ENCODE measurements at regions of chr18 and their contacts with region 1.

Region 1: DNA sequence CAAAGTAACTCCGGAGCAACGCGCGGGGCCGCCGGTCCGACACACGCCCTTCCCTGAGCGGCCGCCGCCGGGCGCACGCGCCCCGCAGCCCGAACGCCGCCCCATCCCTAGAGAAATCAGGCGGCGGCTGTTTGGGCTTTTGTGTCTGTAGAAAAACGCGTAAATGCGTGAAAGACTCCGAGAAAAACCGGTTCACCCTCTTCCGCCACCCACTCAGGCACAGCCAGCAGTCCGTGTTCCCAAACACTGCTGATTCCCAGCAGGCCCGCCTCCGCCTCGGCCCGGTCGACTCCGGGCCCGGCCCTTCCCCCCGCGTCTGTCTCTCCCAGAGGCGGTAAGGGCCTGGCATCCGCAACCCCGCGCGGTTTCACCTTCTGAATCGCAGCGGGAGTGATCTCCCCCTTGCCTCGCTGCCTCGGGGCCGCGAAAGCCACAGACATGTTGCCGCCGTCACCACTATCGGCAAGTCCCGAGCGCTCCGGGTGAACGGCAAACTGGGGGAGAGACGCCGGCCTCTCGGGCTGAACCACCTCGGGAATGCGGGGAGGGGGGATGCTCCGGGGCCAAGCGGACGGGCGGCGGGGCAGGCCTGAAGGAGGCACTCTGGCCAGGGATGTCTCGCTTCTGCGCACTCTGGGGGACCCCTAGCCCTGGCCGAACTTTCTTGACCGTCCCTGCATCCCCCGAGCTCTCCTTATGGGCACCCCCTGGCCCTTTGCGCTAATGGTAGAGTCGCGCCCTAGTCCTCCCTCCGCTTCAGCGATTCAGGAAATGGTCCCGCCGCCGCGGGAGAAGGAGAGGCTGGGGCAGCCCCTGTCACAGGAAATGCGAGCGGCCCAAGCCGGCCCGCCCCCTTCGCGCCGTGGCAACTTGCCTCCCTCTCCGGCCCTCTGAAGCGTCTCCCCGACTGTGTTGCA is at the start of gene SS18:
- DNase-seq: peak; percentile 94 to 96 (median 95)
- ATAC-seq: peak; percentile 96
- H3K4me3 ChIP-seq: peak within 1 kb of the TSS; percentile 60
- H3K4me1 ChIP-seq: peaks cover 16% of the 10 kb centered on the region
- CTCF ChIP-seq: no peak
- total RNA-seq, gene SS18: 45.5 to 61.8 (median 55.7) TPM

Region 2: GRCh38 chr18:25862881-25863600 is 227.3 kb before region 1 on chr18:
- intact Hi-C with region 1: no loop called
- DNase-seq: no peak
- ATAC-seq: no peak
- H3K4me3 ChIP-seq: no peak overlapping the region
- H3K4me1 ChIP-seq: no peaks in the 10 kb centered on the region
- CTCF ChIP-seq: no peak

Region 3: GRCh38 chr18:26226229-26227005 is 136.0 kb after region 1 on chr18 and contains the start of gene TAF4B:
- intact Hi-C with region 1: loop called in 1 of 2 experiments (anchors 10 kb)
- DNase-seq: peak; percentile 94 to 97 (median 95)
- ATAC-seq: peak; percentile 97
- H3K4me3 ChIP-seq: peak within 1 kb of the TSS; percentile 42
- H3K4me1 ChIP-seq: peaks cover 9% of the 10 kb centered on the region
- CTCF ChIP-seq: no peak
- total RNA-seq, gene TAF4B: 3.4 to 4.1 (median 3.8) TPM